ENCODE measurements at regions of chr10 and their contacts with region 1.

Region 1: DNA sequence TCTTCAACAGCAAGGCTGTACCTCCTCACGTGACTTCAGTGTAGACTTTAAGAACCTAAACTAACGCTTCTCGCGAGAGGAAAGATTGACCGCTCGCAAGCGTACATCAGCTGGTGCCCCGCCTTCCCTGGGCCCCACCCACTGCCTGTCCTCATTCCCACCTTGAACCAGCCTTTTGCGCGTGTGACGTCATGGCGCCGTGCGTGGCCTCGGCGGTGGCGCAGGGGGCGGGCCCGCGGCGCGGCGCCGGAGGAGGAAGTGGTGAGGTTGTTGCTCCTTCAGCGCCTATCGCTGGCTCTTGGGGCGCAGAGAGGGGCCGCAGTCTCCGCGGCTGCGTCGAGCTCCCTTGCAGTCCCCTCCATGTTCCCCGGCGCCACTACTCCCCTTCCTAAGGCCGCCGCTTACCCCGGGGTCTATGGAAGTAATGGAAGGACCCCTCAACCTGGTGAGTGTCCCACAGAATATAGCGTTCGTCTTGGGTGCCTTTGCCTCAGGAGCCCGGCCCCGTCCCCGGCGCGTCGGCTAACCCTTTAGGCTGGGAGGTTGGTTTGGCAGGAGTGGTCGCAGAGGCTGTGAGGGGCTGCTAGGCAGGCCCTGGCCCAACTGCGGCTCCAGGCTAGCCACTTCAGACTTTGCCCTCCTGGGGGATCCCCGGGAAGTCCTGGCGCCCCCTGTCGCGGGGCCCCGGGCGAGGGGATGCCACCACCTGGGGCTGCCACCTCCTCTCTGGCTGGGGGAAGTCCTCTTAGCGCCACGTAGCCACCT is at the start of gene NRBF2:
- DNase-seq: peak; percentile 97
- ATAC-seq: peak; percentile 96
- H3K4me3 ChIP-seq: peak within 1 kb of the TSS; percentile 77 to 91 (median 88)
- H3K27ac ChIP-seq: peak within 1 kb of the TSS; percentile 92
- H3K4me1 ChIP-seq: peaks cover 44% of the 10 kb centered on the region
- H3K27me3 ChIP-seq: no peaks in the 10 kb centered on the region; a peak in 1 of 5 replicates
- CTCF ChIP-seq: peak; percentile 74
- EP300 ChIP-seq: no peak
- POLR2A ChIP-seq: peak; percentile 92 to 96
- RAD21 ChIP-seq: 0 out of 2 replicates have a peak, but pooled peaks have one; percentile 15
- total RNA-seq, gene NRBF2: 28.4 and 39.0 TPM in 2 replicates

Region 2: GRCh38 chr10:62804356-62805230 is 328.6 kb before region 1 on chr10 and contains the start of gene ADO:
- CTCF ChIA-PET with region 1: no interaction called
- POLR2A ChIA-PET with region 1: interaction called, 3 read pairs
- in situ Hi-C with region 1: loop called (anchors 10 kb)
- intact Hi-C with region 1: no loop called
- DNase-seq: peak; percentile 73
- ATAC-seq: peak; percentile 92
- H3K4me3 ChIP-seq: peak within 1 kb of the TSS; percentile 60 to 100 (median 95)
- H3K27ac ChIP-seq: peak within 1 kb of the TSS; percentile 75
- H3K4me1 ChIP-seq: peaks cover 34% of the 10 kb centered on the region
- H3K27me3 ChIP-seq: no peaks in the 10 kb centered on the region
- CTCF ChIP-seq: no peak; the same call in 1 of the 2 replicates
- EP300 ChIP-seq: 0 out of 4 replicates have a peak, but pooled peaks of 1 of the 2 experiments have one; percentile 34
- POLR2A ChIP-seq: peak in 1 of 2 experiments; percentile 67; a peak in 3 of 4 replicates
- RAD21 ChIP-seq: peak; percentile 40; the same call in 1 of the 2 replicates
- total RNA-seq, gene ADO: 15.9 and 16.5 TPM in 2 replicates

Region 3: DNA sequence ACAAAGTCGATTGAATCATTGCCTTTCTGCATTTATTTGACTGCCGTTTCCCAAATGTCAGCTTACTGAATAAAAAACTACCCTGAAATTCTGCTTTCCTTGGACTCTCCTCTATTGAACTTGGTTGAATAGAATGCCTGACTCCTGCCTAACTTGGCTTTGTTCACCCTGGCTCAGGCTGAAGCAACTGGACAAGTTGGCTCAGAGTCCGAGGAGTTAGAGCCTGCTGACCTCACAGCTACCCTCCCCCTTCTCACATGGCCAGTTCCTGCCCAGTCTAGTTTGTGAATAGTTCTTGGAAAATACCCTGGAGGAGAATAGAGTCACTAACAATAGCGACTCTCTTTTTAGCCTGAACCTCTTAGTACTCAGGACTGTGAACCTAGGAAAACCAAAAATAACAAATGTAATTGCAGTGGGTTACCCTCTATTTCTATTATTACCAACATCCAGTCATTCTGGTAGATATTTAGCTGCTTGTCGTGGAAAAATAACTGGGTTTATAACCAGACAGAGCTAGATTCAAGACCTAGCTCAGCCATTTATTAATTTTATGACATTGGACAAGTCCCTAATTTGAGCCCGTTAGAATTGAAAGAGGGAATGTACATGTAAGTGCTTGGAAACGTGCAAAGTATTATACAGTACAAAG is 17.4 kb before region 1 on chr10:
- CTCF ChIA-PET with region 1: no interaction called
- POLR2A ChIA-PET with region 1: interaction called, 32 read pairs
- in situ Hi-C with region 1: no loop called
- intact Hi-C with region 1: loop called (anchors 2 kb)
- DNase-seq: peak; percentile 67
- ATAC-seq: peak; percentile 93
- H3K4me3 ChIP-seq: no peak overlapping the region
- H3K27ac ChIP-seq: no peak overlapping the region
- H3K4me1 ChIP-seq: peaks cover 28% of the 10 kb centered on the region
- H3K27me3 ChIP-seq: no peaks in the 10 kb centered on the region; a peak in 1 of 5 replicates
- CTCF ChIP-seq: no peak
- EP300 ChIP-seq: 0 out of 4 replicates have a peak, but pooled peaks of 1 of the 2 experiments have one; percentile 6
- POLR2A ChIP-seq: peak in 1 of 2 experiments; percentile 31; a peak in 1 of 4 replicates
- RAD21 ChIP-seq: no peak

Measured in HepG2 (cell line).